Aorta (tissue), 5 donors: ENCODE measurements at regions of chr5 and their contacts with region 1.

Region 1: DNA sequence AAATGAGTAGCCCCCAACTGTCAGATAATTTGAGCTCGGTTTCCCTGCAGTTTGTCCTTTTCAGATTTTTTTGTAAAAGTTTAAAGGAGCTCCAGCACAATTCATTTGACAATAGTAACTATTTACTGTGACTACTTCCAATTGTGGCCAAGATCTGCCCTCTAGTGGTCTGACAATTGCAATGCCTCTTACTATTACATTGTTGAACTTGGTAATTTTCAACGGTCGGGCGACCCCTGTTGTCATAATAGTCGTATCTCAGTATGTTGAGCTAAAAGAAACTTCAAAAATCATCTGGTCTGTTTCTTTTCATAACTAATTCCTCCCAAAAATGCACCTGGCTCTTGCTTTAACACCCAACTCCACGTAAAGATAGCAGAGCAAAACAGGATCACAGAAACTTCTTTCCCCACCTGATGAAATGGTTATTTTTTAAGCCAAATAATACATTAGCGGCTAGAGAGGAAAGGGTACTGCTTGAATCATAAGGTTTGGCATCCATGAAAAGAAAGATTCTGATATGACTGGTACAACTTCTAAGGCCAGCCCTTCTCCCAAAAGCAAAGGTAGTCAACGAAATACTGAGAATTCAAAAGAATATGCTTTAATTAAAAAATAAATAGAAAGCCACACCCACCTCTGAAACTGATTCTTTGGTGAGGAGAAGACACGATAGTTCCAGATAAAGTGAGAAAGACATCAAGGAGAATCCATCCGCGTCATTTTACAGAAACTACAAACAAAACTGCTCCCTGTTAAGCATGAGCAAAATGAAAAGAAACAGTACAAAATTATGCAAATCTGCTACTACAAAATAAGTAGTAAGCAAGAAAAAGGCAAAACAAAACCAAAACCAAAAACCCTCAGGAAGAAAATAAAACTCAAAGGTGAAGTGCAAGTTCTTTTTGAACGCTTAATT is 76.9 kb upstream of the HTR4 start:
- DNase-seq: peak; percentile 76 to 79
- ATAC-seq: peak; percentile 92
- H3K4me3 ChIP-seq: peak overlapping the region in 1 of 2 donors; percentile 32
- H3K27ac ChIP-seq: no peak overlapping the region
- H3K4me1 ChIP-seq: peaks cover 0 to 3% of the 10 kb centered on the region in 2 donors
- H3K27me3 ChIP-seq: no peaks in the 10 kb centered on the region

Region 2: GRCh38 chr5:148179234-148179824 is 551.9 kb before region 1 on chr5:
- intact Hi-C with region 1: loop called (anchors 5 to 10 kb)
- DNase-seq: no peak
- ATAC-seq: no peak
- H3K4me3 ChIP-seq: no peak overlapping the region
- H3K27ac ChIP-seq: no peak overlapping the region
- H3K4me1 ChIP-seq: no peaks in the 10 kb centered on the region
- H3K27me3 ChIP-seq: no peaks in the 10 kb centered on the region

Region 3: GRCh38 chr5:148443998-148444397 is 287.2 kb before region 1 on chr5:
- intact Hi-C with region 1: loop called (anchors 2 kb)
- DNase-seq: no peak
- ATAC-seq: peak; percentile 88
- H3K4me3 ChIP-seq: no peak overlapping the region
- H3K27ac ChIP-seq: no peak overlapping the region
- H3K4me1 ChIP-seq: no peaks in the 10 kb centered on the region
- H3K27me3 ChIP-seq: no peaks in the 10 kb centered on the region

Region 4: DNA sequence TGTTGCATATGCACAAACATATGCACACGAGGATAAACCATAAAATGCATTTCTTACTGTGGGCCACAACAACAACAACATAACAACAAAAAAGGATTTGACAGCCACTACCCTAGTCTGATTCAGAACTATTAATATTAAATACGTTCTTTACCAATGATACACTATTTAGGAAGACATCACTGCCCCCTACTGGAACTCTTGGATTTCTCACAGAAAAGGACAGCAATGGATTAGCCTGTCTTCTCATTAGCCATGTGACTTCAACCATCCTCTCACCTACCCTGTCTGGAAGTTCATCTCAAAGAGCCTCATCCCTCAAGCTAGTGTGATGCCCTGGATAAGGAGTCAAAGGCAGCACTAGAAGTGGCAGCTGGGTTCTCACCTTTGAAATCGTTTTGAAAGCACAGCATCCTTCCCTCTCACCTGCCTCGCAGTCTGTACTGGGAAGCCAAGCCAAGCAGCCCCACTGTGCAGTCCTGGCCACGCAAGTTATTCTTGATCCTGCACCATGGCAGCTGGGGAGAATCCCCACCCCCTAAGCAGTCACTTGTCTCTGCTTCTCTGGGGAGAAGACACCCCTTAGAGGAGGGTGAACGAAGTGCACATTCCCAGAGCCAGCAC is 267.1 kb after region 1 on chr5:
- intact Hi-C with region 1: loop called in 1 of 2 experiments (anchors 2 kb)
- DNase-seq: no peak
- ATAC-seq: peak; percentile 64
- H3K4me3 ChIP-seq: no peak overlapping the region
- H3K27ac ChIP-seq: no peak overlapping the region
- H3K4me1 ChIP-seq: peaks cover 0 to 1% of the 10 kb centered on the region in 2 donors
- H3K27me3 ChIP-seq: no peaks in the 10 kb centered on the region

Region 5: DNA sequence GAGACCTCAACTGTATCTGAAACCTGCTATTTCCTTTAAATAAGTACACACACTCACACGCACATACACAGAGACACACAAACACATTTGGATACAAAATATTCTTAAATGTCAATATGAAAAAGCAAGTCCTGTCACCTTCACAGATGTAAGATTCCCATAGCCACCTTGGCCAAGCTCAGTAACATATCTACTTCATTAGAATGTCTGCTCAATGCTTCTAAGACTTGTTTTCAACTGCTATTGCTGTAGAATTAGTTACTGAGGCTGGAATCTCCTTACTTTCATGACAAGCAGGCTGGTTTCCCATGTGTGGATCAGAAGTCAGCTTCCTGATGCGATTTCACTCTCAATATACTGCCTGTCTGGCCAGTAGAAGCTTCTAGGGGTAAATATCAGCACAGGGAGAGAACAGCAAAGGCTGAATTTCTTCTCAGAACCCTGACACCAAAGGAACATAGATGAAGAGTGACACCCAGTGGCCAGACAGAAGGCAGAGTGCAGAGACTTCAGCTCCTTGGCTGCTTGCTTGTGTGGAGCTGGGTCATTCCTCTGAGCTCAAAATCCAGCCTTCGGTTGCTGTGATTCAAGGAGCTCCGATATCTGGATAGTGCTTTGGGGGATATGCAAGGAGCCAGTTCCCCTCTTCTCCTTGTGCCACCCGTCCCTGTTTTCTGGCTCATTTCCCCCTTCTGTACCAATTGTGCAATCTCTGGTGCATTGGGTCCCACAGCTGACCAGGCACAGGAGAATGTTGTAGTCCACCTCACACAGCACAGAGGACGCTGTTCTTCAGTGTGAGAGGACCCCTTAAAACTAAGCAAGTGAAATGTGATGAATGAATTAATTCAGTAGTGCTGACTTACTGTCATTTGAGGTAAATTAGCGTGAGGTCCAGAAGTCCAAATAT is 383.5 kb after region 1 on chr5:
- intact Hi-C with region 1: loop called (anchors 5 to 10 kb)
- DNase-seq: peak in 1 of 2 donors; percentile 62
- ATAC-seq: peak; percentile 87
- H3K4me3 ChIP-seq: no peak overlapping the region
- H3K27ac ChIP-seq: no peak overlapping the region
- H3K4me1 ChIP-seq: no peaks in the 10 kb centered on the region
- H3K27me3 ChIP-seq: no peaks in the 10 kb centered on the region